Transverse colon (tissue), 4 donors: ENCODE measurements at regions of chr4 and their contacts with region 1.

Region 1: DNA sequence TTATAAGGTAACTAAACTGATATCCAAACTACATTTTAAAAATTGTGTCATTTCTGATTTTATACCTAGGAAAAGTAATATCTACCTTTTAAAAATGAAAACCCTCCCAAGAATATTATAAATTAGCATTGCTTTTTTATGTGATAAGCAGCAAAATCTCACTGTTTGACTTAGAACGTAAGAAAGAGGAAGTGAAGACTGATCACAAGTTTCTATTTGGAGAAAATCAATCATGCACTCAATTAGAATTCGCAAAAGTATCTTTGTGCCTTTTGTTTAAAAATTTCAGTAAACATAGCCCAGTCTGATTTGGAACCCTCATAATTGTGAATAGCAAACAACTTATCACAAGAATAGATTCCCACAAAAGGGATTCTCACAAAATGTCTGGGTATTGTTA is 142.7 kb downstream of the TENM3 start:
- DNase-seq: no peak
- H3K4me3 ChIP-seq: no peak overlapping the region
- H3K27ac ChIP-seq: no peak overlapping the region
- H3K4me1 ChIP-seq: no peaks in the 10 kb centered on the region
- H3K27me3 ChIP-seq: no peaks in the 10 kb centered on the region
- CTCF ChIP-seq: no peak
- EP300 ChIP-seq: no peak
- POLR2A ChIP-seq: no peak

Region 2: GRCh38 chr4:182042945-182043344 is 343.0 kb before region 1 on chr4:
- in situ Hi-C with region 1: no loop called
- intact Hi-C with region 1: loop called (anchors 5 kb)
- DNase-seq: no peak
- H3K4me3 ChIP-seq: no peak overlapping the region
- H3K27ac ChIP-seq: no peak overlapping the region
- H3K4me1 ChIP-seq: no peaks in the 10 kb centered on the region
- H3K27me3 ChIP-seq: no peaks in the 10 kb centered on the region
- CTCF ChIP-seq: no peak
- EP300 ChIP-seq: no peak
- POLR2A ChIP-seq: no peak